MCF 10A (cell line): ENCODE measurements at regions of chr11 and their contacts with region 1.

Region 1: GRCh38 chr11:35822815-35823495 is 120.9 kb upstream of the LDLRAD3 start:
- DNase-seq: peak; percentile 15
- H3K4me3 Mint-ChIP-seq: no peak overlapping the region
- H3K27ac Mint-ChIP-seq: peak overlapping the region; percentile 29
- H3K4me1 Mint-ChIP-seq: peaks cover 17% of the 10 kb centered on the region
- H3K27me3 Mint-ChIP-seq: no peaks in the 10 kb centered on the region
- CTCF ChIP-seq: no peak

Region 2: DNA sequence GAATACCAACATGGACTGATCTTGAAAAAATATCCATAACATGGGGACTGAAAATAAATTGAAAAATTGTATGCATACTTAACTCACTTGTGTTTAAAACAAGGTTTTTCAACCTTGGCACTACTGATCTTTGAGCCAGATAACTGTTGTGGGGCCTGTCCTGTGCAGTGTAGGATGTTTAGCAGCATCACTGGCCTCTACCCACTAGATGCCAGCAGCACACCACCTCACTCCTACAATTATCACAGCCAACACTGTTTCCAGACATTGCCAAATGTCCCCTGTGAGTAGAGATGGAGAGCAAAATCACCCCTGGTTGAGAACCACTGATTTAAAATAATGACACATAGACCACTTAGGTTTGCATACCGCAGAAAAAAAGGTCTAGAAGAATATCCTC is 358.6 kb before region 1 on chr11:
- CTCF ChIA-PET with region 1: no interaction called
- POLR2A ChIA-PET with region 1: no interaction called
- intact Hi-C with region 1: loop called (anchors 5 kb)
- DNase-seq: peak; percentile 19
- H3K4me3 Mint-ChIP-seq: no peak overlapping the region
- H3K27ac Mint-ChIP-seq: no peak overlapping the region
- H3K4me1 Mint-ChIP-seq: no peaks in the 10 kb centered on the region
- H3K27me3 Mint-ChIP-seq: peaks cover 29% of the 10 kb centered on the region
- CTCF ChIP-seq: no peak

Region 3: GRCh38 chr11:35541621-35542375 is 281.2 kb before region 1 on chr11:
- CTCF ChIA-PET with region 1: no interaction called
- POLR2A ChIA-PET with region 1: no interaction called
- intact Hi-C with region 1: no loop called
- DNase-seq: no peak
- H3K4me3 Mint-ChIP-seq: no peak overlapping the region
- H3K27ac Mint-ChIP-seq: no peak overlapping the region
- H3K4me1 Mint-ChIP-seq: peaks cover 8% of the 10 kb centered on the region
- H3K27me3 Mint-ChIP-seq: no peaks in the 10 kb centered on the region
- CTCF ChIP-seq: no peak

Region 4: DNA sequence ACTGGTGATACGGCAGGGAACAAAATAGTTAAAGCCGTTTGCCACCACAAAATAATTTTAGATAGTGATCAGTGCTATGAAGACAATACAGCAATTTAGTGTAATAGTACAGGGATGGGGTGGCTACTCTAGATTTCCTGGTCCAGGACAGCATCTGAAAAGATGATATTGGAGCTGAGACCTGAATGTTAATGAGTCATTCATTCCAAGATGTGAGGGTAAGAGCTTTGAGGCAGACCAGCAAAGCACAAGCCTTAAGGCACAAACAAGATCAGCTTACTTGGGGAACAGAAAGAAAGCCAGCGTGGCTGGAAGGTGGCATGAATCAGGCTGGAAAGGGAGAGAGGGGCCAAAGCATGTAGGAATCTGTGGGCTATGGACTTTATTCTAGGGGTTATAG is 28.1 kb before region 1 on chr11:
- CTCF ChIA-PET with region 1: interaction called, 33 read pairs
- POLR2A ChIA-PET with region 1: interaction called, 5 read pairs
- intact Hi-C with region 1: no loop called
- DNase-seq: peak; percentile 61
- H3K4me3 Mint-ChIP-seq: no peak overlapping the region
- H3K27ac Mint-ChIP-seq: peak overlapping the region; percentile 81
- H3K4me1 Mint-ChIP-seq: peaks cover 64% of the 10 kb centered on the region
- H3K27me3 Mint-ChIP-seq: no peaks in the 10 kb centered on the region
- CTCF ChIP-seq: no peak

Region 5: DNA sequence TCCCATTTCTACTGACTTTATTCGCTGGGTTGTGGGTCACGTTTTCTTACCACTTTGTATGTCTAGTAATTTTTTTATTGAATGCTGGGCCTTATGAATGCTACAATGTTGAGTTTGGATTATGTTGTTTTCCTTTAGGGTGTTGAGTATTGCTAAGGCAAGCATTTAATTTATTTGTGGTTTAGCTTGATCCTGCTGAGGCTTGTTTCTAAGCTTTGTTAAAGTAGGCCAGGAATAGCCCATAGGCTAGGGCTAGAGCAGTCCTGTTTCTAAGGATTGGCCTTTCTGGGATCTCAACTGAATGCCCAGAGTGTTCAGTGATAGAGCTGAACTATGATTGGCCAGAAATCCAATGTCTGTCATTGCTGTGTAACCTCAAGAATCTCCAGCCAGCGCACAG is 64.8 kb after region 1 on chr11:
- CTCF ChIA-PET with region 1: interaction called, 38 read pairs
- POLR2A ChIA-PET with region 1: interaction called, 25 read pairs
- intact Hi-C with region 1: no loop called
- DNase-seq: no peak
- H3K4me3 Mint-ChIP-seq: no peak overlapping the region
- H3K27ac Mint-ChIP-seq: no peak overlapping the region
- H3K4me1 Mint-ChIP-seq: peaks cover 13% of the 10 kb centered on the region
- H3K27me3 Mint-ChIP-seq: no peaks in the 10 kb centered on the region
- CTCF ChIP-seq: no peak

Region 6: GRCh38 chr11:35943713-35944655 is 121.0 kb after region 1 on chr11 and contains the start of gene LDLRAD3:
- CTCF ChIA-PET with region 1: interaction called, 8 read pairs
- POLR2A ChIA-PET with region 1: interaction called, 5 read pairs
- intact Hi-C with region 1: loop called (anchors 5 kb)
- DNase-seq: peak; percentile 86
- H3K4me3 Mint-ChIP-seq: peak within 1 kb of the TSS; percentile 93
- H3K27ac Mint-ChIP-seq: peak within 1 kb of the TSS; percentile 73
- H3K4me1 Mint-ChIP-seq: peaks cover 37% of the 10 kb centered on the region
- H3K27me3 Mint-ChIP-seq: no peaks in the 10 kb centered on the region
- CTCF ChIP-seq: no peak
- total RNA-seq, gene LDLRAD3: 39.2 and 55.7 TPM in 2 replicates

Region 7: GRCh38 chr11:36034551-36035331 is 211.8 kb after region 1 on chr11:
- CTCF ChIA-PET with region 1: interaction called, 10 read pairs
- POLR2A ChIA-PET with region 1: interaction called, 3 read pairs
- intact Hi-C with region 1: loop called (anchors 1 kb)
- DNase-seq: peak; percentile 56
- H3K4me3 Mint-ChIP-seq: peak overlapping the region; percentile 26
- H3K27ac Mint-ChIP-seq: peak overlapping the region; percentile 77
- H3K4me1 Mint-ChIP-seq: peaks cover 43% of the 10 kb centered on the region
- H3K27me3 Mint-ChIP-seq: no peaks in the 10 kb centered on the region
- CTCF ChIP-seq: no peak

Region 8: GRCh38 chr11:36149538-36150242 is 326.7 kb after region 1 on chr11:
- CTCF ChIA-PET with region 1: interaction called, 15 read pairs
- POLR2A ChIA-PET with region 1: no interaction called
- intact Hi-C with region 1: loop called (anchors 1 kb)
- DNase-seq: peak; percentile 100
- H3K4me3 Mint-ChIP-seq: peak overlapping the region; percentile 29
- H3K27ac Mint-ChIP-seq: peak overlapping the region; percentile 82
- H3K4me1 Mint-ChIP-seq: peaks cover 42% of the 10 kb centered on the region
- H3K27me3 Mint-ChIP-seq: no peaks in the 10 kb centered on the region
- CTCF ChIP-seq: peak; percentile 80